ENCODE measurements at regions of chr3 and their contacts with region 1.

Region 1: DNA sequence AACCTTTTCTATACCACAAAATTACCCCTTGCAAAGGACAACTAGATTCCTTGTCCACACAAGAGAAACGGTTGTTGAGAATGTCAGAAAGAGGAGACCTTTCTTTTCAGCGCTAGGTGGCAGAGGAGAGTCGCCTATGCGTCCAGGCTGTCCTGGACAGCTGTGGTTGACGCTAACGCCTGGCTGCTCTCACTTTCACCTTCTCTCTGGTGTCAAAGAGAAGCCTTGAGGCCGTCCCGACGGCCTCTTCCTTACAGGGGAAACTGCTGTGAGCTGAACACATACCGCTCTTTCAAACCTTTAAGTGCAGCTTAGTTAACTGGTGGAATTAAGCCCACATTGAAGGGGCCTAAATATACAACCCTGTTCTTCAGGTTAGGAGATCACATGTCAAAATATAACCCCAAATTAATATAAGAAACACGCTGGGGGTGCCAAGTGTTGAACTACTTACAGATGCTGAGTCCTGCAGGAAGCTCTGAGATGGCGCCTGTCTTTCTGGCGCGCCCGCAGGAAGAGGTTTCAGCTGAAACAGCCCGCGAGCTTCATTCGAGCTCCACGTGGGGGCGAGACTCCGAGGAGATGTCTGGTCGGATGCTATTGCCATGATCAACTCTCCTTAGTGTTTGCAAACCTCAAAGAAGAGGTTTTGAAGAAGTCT is 26.1 kb upstream of the KBTBD8 start:
- DNase-seq: peak; percentile 79
- ATAC-seq: peak; percentile 95
- H3K4me3 Mint-ChIP-seq: peak overlapping the region; percentile 67
- H3K27ac Mint-ChIP-seq: peak overlapping the region; percentile 69
- H3K4me1 Mint-ChIP-seq: peaks cover 13% of the 10 kb centered on the region
- H3K27me3 Mint-ChIP-seq: peaks cover 19% of the 10 kb centered on the region

Region 2: GRCh38 chr3:66625505-66626216 is 346.4 kb before region 1 on chr3:
- CTCF ChIA-PET with region 1: no interaction called
- DNase-seq: no peak
- ATAC-seq: no peak
- H3K4me3 Mint-ChIP-seq: no peak overlapping the region
- H3K27ac Mint-ChIP-seq: no peak overlapping the region
- H3K4me1 Mint-ChIP-seq: no peaks in the 10 kb centered on the region
- H3K27me3 Mint-ChIP-seq: no peaks in the 10 kb centered on the region

Region 3: DNA sequence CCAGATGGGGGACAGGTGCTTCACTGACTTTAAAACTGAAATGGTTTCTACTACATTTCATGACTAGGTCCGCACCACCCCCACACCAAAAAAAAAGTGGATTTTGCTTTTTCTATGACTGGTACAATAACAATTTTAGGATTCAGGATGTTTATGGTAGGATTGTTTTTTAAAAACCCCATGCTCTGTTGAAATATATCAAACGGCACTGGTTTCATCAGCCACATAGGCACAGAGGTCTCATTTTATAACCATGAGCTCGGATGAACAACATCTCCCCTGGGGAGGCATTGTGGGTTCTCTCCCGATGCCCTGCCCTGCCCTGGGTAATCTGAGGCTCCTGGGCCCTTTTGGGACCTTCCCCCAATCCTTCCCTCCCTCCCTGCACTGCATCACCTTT is 176.7 kb before region 1 on chr3:
- CTCF ChIA-PET with region 1: no interaction called
- DNase-seq: no peak
- ATAC-seq: no peak
- H3K4me3 Mint-ChIP-seq: no peak overlapping the region
- H3K27ac Mint-ChIP-seq: no peak overlapping the region
- H3K4me1 Mint-ChIP-seq: no peaks in the 10 kb centered on the region
- H3K27me3 Mint-ChIP-seq: peaks cover 12% of the 10 kb centered on the region

Region 4: GRCh38 chr3:66923969-66924368 is 48.1 kb before region 1 on chr3:
- CTCF ChIA-PET with region 1: no interaction called
- DNase-seq: no peak
- ATAC-seq: no peak
- H3K4me3 Mint-ChIP-seq: no peak overlapping the region
- H3K27ac Mint-ChIP-seq: no peak overlapping the region
- H3K4me1 Mint-ChIP-seq: no peaks in the 10 kb centered on the region
- H3K27me3 Mint-ChIP-seq: peaks cover 14% of the 10 kb centered on the region

Region 5: GRCh38 chr3:66938338-66938963 is 33.6 kb before region 1 on chr3:
- CTCF ChIA-PET with region 1: interaction called, 16 read pairs
- DNase-seq: peak; percentile 43
- ATAC-seq: peak; percentile 53
- H3K4me3 Mint-ChIP-seq: no peak overlapping the region
- H3K27ac Mint-ChIP-seq: no peak overlapping the region
- H3K4me1 Mint-ChIP-seq: no peaks in the 10 kb centered on the region
- H3K27me3 Mint-ChIP-seq: peaks cover 16% of the 10 kb centered on the region

Region 6: GRCh38 chr3:66983101-66983500 is 11.1 kb after region 1 on chr3:
- CTCF ChIA-PET with region 1: interaction called, 11 read pairs
- DNase-seq: no peak
- ATAC-seq: no peak
- H3K4me3 Mint-ChIP-seq: no peak overlapping the region
- H3K27ac Mint-ChIP-seq: no peak overlapping the region
- H3K4me1 Mint-ChIP-seq: no peaks in the 10 kb centered on the region
- H3K27me3 Mint-ChIP-seq: peaks cover 16% of the 10 kb centered on the region

Region 7: DNA sequence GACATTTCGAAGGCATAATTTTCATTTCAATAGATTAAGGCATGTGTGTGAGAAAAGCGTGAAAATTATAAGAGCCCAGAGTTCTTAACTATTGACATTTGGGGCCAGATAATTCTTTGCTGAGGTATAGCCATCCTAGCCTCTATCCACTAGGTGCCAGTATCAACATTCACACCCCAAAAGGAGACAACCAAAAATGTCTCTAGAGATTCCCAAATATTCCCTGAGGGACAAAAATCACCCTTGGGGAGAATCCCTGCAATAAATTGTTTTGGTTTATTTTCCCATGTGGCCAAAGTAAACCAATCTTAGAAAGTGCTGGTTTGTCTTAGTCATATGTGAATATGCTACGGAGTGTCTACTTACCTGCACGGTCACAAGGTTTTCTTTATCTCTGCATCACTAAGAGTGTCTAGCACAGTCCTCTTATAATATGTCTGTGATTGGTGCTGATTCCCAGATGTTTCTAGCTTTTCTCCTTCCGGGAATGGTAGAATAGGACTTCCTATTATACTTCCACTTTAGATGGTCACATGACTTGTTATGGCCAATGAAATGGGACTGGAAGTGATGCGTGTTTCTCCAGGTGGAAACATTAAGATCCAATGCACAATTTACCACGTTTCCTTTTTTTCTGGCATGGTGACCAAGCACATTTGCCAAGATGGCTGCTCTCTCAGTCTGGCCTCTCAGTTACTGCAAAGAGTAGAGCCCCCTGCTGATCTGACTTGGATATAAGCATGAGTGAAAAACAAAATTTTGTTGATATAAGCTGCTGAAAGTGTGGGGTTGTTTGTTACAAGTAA is 18.0 kb after region 1 on chr3:
- CTCF ChIA-PET with region 1: interaction called, 30 read pairs
- DNase-seq: no peak
- ATAC-seq: no peak
- H3K4me3 Mint-ChIP-seq: no peak overlapping the region
- H3K27ac Mint-ChIP-seq: no peak overlapping the region
- H3K4me1 Mint-ChIP-seq: no peaks in the 10 kb centered on the region
- H3K27me3 Mint-ChIP-seq: peaks cover 23% of the 10 kb centered on the region

Region 8: GRCh38 chr3:66998113-66998903 is 26.3 kb after region 1 on chr3 and contains the start of gene KBTBD8:
- CTCF ChIA-PET with region 1: interaction called, 34 read pairs
- DNase-seq: peak; percentile 99
- ATAC-seq: peak; percentile 98
- H3K4me3 Mint-ChIP-seq: peak within 1 kb of the TSS; percentile 92
- H3K27ac Mint-ChIP-seq: peak within 1 kb of the TSS; percentile 88
- H3K4me1 Mint-ChIP-seq: peaks cover 36% of the 10 kb centered on the region
- H3K27me3 Mint-ChIP-seq: peaks cover 32% of the 10 kb centered on the region
- total RNA-seq, gene KBTBD8: 10.4 to 19.2 TPM

Region 9: GRCh38 chr3:67037615-67038014 is 65.6 kb after region 1 on chr3:
- CTCF ChIA-PET with region 1: interaction called, 12 read pairs
- DNase-seq: no peak
- ATAC-seq: no peak
- H3K4me3 Mint-ChIP-seq: no peak overlapping the region
- H3K27ac Mint-ChIP-seq: no peak overlapping the region
- H3K4me1 Mint-ChIP-seq: no peaks in the 10 kb centered on the region
- H3K27me3 Mint-ChIP-seq: peaks cover 5% of the 10 kb centered on the region

Region 10: GRCh38 chr3:67113802-67114407 is 141.9 kb after region 1 on chr3:
- CTCF ChIA-PET with region 1: interaction called, 32 read pairs
- DNase-seq: peak; percentile 88
- ATAC-seq: peak; percentile 91
- H3K4me3 Mint-ChIP-seq: no peak overlapping the region
- H3K27ac Mint-ChIP-seq: no peak overlapping the region
- H3K4me1 Mint-ChIP-seq: peaks cover 4% of the 10 kb centered on the region
- H3K27me3 Mint-ChIP-seq: peaks cover 16% of the 10 kb centered on the region

Measured in activated CD8-positive, alpha-beta memory T cell treated with anti-CD3 and anti-CD28 coated beads, Interleukin-2, amount 10 ng/mL, durations not matched to agents 7 days and 5 days (primary cell).